Right cardiac atrium (tissue), 5 donors: ENCODE measurements at regions of chr3 and their contacts with region 1.

Region 1: DNA sequence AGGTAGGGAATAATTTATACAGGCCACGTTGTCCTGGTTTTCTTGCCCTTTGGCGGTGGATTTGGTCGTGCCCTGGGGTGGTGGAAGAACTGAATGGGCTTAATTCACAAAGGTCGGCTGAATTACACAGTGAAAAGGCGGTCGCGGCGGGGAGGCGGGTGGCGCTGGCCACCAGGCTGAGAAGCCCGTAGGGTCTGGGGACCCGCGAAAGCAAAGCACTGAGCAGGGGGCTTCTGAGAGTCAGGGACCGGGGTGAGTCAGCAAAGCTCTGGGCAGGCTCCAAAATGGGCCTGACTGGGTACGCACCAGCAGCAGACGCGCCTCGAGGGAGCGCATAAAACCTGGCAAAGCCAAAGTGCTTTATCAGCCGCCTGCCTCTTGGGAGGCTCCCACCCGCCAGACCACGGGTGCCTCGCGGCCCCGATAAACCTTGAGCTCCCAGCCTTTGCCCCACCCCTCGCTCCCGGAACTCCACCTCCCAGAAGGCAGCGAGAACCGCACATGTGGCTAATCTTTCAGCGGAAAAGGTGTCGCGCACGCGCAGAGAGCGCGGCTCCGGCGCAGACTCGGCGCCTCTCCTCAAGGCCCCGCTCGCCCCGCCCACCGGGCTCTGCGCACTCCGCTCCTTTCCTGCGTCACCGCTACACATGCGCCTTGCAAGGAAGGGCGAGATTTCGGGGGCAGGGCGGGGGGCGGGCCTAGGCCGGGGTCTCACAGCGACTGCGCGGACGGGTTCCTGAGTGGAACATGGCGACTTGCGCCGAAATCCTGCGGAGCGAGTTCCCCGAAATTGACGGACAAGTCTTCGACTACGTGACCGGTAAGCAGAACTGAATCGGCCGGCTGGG is at the start of gene ABCF3:
- DNase-seq: peak; percentile 100
- ATAC-seq: peak; percentile 98
- H3K4me3 ChIP-seq: peak within 1 kb of the TSS; percentile 85
- H3K27ac ChIP-seq: peak within 1 kb of the TSS; percentile 91
- H3K4me1 ChIP-seq: peaks cover 2% of the 10 kb centered on the region
- H3K27me3 ChIP-seq: no peaks in the 10 kb centered on the region
- total RNA-seq, gene ABCF3: 59.2 to 72.9 (median 63.5) TPM

Region 2: GRCh38 chr3:184145111-184145524 is 40.6 kb before region 1 on chr3:
- intact Hi-C with region 1: loop called in 1 of 4 experiments (anchors 5 kb)
- DNase-seq: peak; percentile 55 to 87 (median 76)
- ATAC-seq: peak; percentile 58 to 60
- H3K4me3 ChIP-seq: no peak overlapping the region
- H3K27ac ChIP-seq: no peak overlapping the region
- H3K4me1 ChIP-seq: no peaks in the 10 kb centered on the region
- H3K27me3 ChIP-seq: no peaks in the 10 kb centered on the region

Region 3: DNA sequence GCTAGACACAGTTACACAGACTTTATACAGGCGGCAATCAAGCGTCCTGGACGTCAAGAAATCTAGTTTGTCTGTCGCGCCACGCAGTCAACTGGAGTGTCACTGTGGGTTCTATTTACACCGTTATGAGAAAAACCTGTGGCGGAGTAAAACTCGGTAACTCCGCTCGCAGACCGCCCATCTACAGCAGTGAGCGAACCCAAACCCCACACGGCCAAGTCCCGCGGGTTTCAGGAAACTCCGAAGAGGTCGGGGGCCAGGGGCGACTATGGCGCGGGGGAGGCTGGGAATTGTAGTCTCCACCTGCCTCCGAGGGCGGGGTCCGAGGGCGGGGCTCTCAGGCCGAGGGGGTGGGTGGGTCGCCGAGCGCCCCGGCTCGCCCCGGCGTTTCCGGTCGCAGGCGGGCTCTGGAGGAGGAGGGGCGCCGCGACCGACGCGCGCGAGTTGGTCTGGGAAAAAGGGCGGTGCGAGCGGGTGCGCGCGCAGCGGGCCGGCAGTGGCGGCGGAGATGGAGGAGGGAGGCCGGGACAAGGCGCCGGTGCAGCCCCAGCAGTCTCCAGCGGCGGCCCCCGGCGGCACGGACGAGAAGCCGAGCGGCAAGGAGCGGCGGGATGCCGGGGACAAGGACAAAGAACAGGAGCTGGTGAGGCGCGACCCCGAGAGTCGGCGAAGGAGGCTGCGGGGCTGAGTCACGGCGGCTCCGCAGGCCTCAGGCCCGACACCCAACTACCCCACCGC is 113.2 kb after region 1 on chr3 and contains the start of gene PSMD2:
- intact Hi-C with region 1: loop called in 1 of 4 experiments (anchors 10 kb)
- DNase-seq: peak; percentile 98 to 99 (median 99)
- ATAC-seq: peak; percentile 99
- H3K4me3 ChIP-seq: peak within 1 kb of the TSS; percentile 89
- H3K27ac ChIP-seq: peak within 1 kb of the TSS; percentile 89
- H3K4me1 ChIP-seq: peaks cover 3% of the 10 kb centered on the region
- H3K27me3 ChIP-seq: no peaks in the 10 kb centered on the region
- total RNA-seq, gene PSMD2: 198 to 230 (median 227) TPM

Region 4: DNA sequence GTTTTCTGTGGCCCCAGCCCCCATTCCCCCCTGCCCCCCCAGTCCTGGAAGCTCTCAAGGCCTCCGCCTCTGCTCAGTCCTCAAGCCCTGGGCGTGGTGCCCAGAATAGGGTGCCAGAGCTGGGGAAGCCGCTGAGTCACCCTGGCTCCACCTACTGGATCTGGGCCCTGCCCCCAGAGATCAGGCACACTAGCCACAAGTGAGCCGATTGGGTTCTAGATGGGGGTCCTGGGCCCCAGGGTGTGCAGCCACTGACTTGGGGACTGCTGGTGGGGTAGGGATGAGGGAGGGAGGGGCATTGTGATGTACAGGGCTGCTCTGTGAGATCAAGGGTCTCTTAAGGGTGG is 134.4 kb after region 1 on chr3:
- intact Hi-C with region 1: no loop called
- DNase-seq: peak; percentile 99
- ATAC-seq: peak; percentile 89 to 93
- H3K4me3 ChIP-seq: no peak overlapping the region
- H3K27ac ChIP-seq: peak overlapping the region; percentile 53
- H3K4me1 ChIP-seq: peaks cover 21% of the 10 kb centered on the region
- H3K27me3 ChIP-seq: no peaks in the 10 kb centered on the region